GM12878 (cell line): ENCODE measurements at regions of chr3 and their contacts with region 1.

Region 1: DNA sequence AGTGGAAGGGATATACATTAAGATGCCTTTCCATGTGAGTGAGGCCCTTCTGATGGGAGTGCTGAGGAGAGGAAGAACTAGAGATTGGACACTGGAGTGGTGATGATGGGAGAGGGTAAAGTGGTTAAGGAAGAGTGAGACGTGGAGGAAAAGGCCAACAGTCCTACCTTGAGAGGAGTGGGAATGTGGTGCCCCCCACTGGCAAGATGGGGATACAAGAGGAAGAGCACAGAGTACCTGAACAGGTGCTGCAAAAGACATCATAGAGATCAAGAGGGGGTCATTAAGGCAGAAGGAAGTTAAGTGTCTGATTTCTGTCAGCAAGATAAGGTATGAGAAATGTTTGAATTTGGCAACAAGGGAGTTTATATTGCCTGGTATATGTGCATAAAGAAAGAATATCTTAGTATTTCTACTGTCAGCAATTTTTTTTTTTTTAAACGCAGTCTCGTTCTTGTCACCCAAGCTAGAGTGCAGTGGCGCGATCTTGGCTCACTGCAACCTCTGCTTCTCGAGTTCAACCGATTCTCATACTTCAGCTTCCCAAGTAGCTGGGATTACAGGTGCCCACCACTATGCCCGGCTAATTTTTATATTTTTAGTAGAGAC is 34.0 kb downstream of the ARIH2 start:
- DNase-seq: no peak
- ATAC-seq: peak; percentile 70
- H3K4me3 ChIP-seq: no peak overlapping the region
- H3K27ac ChIP-seq: no peak overlapping the region
- H3K4me1 ChIP-seq: no peaks in the 10 kb centered on the region
- H3K27me3 ChIP-seq: no peaks in the 10 kb centered on the region
- CTCF ChIP-seq: peak; percentile 66 to 71 (median 66)
- EP300 ChIP-seq: no peak
- POLR2A ChIP-seq: no peak
- RAD21 ChIP-seq: peak; percentile 73

Region 2: GRCh38 chr3:48739955-48740823 is 212.4 kb before region 1 on chr3:
- CTCF ChIA-PET with region 1: interaction called, 36 read pairs
- POLR2A ChIA-PET with region 1: no interaction called
- RAD21 ChIA-PET with region 1: interaction called, 18 read pairs
- SMC1A ChIA-PET with region 1: interaction called, 7 read pairs
- in situ Hi-C with region 1: no loop called
- intact Hi-C with region 1: loop called (anchors 1 kb)
- DNase-seq: no peak
- ATAC-seq: peak; percentile 99
- H3K4me3 ChIP-seq: no peak overlapping the region
- H3K27ac ChIP-seq: no peak overlapping the region
- H3K4me1 ChIP-seq: peaks cover 9% of the 10 kb centered on the region
- H3K27me3 ChIP-seq: no peaks in the 10 kb centered on the region
- CTCF ChIP-seq: peak; percentile 73 to 91 (median 77)
- EP300 ChIP-seq: no peak
- POLR2A ChIP-seq: no peak
- RAD21 ChIP-seq: peak; percentile 31

Region 3: GRCh38 chr3:48926425-48927392 is 25.9 kb before region 1 on chr3:
- CTCF ChIA-PET with region 1: interaction called, 18 read pairs
- POLR2A ChIA-PET with region 1: interaction called, 6 read pairs
- RAD21 ChIA-PET with region 1: interaction called, 3 read pairs
- SMC1A ChIA-PET with region 1: interaction called, 11 read pairs
- in situ Hi-C with region 1: no loop called
- intact Hi-C with region 1: no loop called
- DNase-seq: no peak
- ATAC-seq: peak; percentile 60
- H3K4me3 ChIP-seq: no peak overlapping the region; the same call in 1 of the 2 replicates
- H3K27ac ChIP-seq: peak overlapping the region; percentile 33
- H3K4me1 ChIP-seq: peaks cover 30% of the 10 kb centered on the region
- H3K27me3 ChIP-seq: no peaks in the 10 kb centered on the region
- CTCF ChIP-seq: no peak
- EP300 ChIP-seq: no peak
- POLR2A ChIP-seq: no peak
- RAD21 ChIP-seq: no peak

Region 4: DNA sequence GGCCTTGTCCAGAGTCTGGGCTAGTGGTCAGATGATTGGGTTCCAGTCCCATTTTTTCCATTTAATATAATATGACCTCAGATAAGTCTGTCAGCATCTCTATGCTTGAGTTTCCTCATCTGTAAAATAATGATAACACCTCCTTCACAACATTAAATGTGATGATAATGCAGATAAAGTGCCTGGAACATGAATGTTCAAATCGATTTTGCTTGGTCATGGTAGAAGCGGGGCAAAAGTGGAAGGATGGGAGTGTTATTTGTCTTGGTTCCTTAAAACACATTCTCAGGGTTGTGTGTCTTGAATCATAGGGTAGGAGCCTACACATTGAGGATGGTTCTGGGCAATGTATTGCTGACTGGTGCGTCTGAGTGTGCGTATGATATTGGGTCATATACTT is 17.1 kb before region 1 on chr3:
- CTCF ChIA-PET with region 1: interaction called, 18 read pairs
- POLR2A ChIA-PET with region 1: interaction called, 3 read pairs
- RAD21 ChIA-PET with region 1: interaction called, 3 read pairs
- SMC1A ChIA-PET with region 1: interaction called, 11 read pairs
- in situ Hi-C with region 1: no loop called
- intact Hi-C with region 1: no loop called
- DNase-seq: no peak
- ATAC-seq: no peak
- H3K4me3 ChIP-seq: no peak overlapping the region
- H3K27ac ChIP-seq: no peak overlapping the region
- H3K4me1 ChIP-seq: no peaks in the 10 kb centered on the region
- H3K27me3 ChIP-seq: no peaks in the 10 kb centered on the region
- CTCF ChIP-seq: no peak
- EP300 ChIP-seq: no peak
- POLR2A ChIP-seq: no peak
- RAD21 ChIP-seq: no peak

Region 5: DNA sequence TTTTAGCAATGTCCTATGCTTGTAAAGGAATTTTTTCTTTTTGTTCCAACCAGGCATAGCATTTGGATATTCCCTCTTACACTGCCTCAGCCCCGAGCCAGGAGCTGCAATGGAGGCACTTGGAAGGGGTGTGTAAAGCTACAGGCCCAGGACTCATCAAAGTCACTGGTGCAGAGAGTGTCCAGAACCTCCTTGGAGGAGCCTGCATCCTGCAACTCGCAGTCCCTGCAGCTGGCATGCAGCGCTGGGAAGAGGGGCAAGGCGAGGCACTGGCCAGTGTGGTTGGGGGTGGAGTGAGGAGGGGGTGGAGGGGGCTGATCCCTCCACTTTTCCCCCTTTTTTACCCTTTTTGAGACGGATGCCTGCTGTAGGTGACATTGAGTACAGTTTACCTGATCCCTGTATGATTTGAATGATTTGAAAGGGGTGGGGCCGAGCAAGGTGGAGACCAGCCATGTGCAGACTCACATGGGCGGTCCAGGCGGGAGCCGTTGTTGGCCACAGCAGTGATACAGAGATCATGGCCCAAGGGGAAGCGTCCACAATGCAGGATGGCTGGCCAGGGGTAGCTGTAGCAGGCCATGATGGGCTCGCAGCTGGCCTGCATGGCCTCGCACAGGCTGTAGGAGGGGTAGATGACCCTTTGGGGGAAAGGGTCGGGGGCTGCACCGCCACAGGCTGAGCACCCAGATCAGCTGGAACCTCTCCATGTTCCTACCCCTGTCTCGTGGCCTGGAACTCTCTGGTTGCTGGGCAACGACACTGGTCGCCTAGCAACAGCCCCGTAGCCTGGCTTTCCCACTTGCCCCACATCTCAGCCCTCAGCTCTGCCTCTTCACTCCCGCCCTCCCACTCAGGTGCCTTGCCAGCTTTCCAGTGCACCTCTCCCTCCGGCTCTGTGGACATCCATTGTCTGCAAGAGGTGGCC is 45.4 kb after region 1 on chr3:
- CTCF ChIA-PET with region 1: no interaction called
- POLR2A ChIA-PET with region 1: no interaction called
- RAD21 ChIA-PET with region 1: no interaction called
- SMC1A ChIA-PET with region 1: no interaction called
- in situ Hi-C with region 1: no loop called
- intact Hi-C with region 1: no loop called
- DNase-seq: no peak
- ATAC-seq: no peak
- H3K4me3 ChIP-seq: no peak overlapping the region
- H3K27ac ChIP-seq: no peak overlapping the region
- H3K4me1 ChIP-seq: no peaks in the 10 kb centered on the region
- H3K27me3 ChIP-seq: no peaks in the 10 kb centered on the region
- CTCF ChIP-seq: no peak
- EP300 ChIP-seq: no peak
- POLR2A ChIP-seq: no peak
- RAD21 ChIP-seq: no peak